AG04450 (cell line): ENCODE measurements at regions of chr17 and their contacts with region 1.

Region 1: GRCh38 chr17:50707289-50708049 is at the start of gene ANKRD40:
- DNase-seq: peak; percentile 79
- H3K4me3 ChIP-seq: peak within 1 kb of the TSS; percentile 89
- H3K27ac ChIP-seq: peak within 1 kb of the TSS; percentile 93
- H3K27me3 ChIP-seq: no peaks in the 10 kb centered on the region
- CTCF ChIP-seq: no peak
- polyA plus RNA-seq, gene ANKRD40: 32.8 and 39.8 TPM in 2 replicates

Region 2: GRCh38 chr17:50541716-50542688 is 165.5 kb before region 1 on chr17:
- CTCF ChIA-PET with region 1: interaction called, 7 read pairs
- POLR2A ChIA-PET with region 1: interaction called, 10 read pairs
- DNase-seq: no peak
- H3K4me3 ChIP-seq: peak overlapping the region; percentile 68
- H3K27ac ChIP-seq: no peak overlapping the region
- H3K27me3 ChIP-seq: no peaks in the 10 kb centered on the region
- CTCF ChIP-seq: peak; percentile 21; the same call in 1 of the 2 replicates

Region 3: DNA sequence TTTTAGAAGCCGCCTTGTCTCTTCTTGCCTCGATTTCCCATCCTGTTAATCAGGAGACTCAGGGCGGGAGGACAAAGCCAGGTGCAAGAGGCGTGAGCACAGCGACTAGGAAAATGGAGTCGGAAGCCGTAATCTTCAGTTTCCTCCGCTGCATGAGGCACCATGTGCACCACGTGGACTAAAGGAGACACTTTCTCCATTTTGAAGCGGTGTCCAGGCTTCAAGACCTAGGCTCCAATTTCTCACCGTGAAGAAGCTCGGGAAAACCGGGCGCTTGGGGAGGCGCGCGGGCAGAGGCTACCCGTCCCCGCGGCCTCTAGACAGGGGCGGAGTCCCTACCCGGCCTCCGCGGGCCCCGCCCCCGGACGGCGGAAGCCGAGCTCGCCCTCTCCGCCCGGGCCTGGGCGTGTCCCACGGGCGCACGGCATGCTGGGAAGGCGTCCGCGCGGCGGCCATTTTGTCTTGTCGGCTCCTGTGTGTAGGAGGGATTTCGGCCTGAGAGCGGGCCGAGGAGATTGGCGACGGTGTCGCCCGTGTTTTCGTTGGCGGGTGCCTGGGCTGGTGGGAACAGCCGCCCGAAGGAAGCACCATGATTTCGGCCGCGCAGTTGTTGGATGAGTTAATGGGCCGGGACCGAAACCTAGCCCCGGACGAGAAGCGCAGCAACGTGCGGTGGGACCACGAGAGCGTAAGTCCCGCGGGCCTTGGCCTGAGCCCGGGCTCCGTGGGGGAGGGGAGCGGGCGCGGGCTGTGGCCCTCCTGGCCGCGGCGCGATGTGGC is 11.9 kb after region 1 on chr17 and contains the start of gene LUC7L3:
- CTCF ChIA-PET with region 1: no interaction called
- POLR2A ChIA-PET with region 1: interaction called, 19 read pairs
- DNase-seq: peak; percentile 78
- H3K4me3 ChIP-seq: peak within 1 kb of the TSS; percentile 93
- H3K27ac ChIP-seq: peak within 1 kb of the TSS; percentile 96
- H3K27me3 ChIP-seq: no peaks in the 10 kb centered on the region
- CTCF ChIP-seq: no peak
- polyA plus RNA-seq, gene LUC7L3: 70.6 and 120 TPM in 2 replicates

Region 4: GRCh38 chr17:50728881-50729765 is 21.7 kb after region 1 on chr17:
- CTCF ChIA-PET with region 1: interaction called, 4 read pairs
- POLR2A ChIA-PET with region 1: interaction called, 14 read pairs
- DNase-seq: no peak
- H3K4me3 ChIP-seq: no peak overlapping the region
- H3K27ac ChIP-seq: no peak overlapping the region
- H3K27me3 ChIP-seq: no peaks in the 10 kb centered on the region
- CTCF ChIP-seq: no peak